Activated CD8-positive, alpha-beta memory T cell treated with anti-CD3 and anti-CD28 coated beads, Interleukin-2, amount 10 ng/mL, durations not matched to agents 7 days and 5 days (primary cell): ENCODE measurements at regions of chr9 and their contacts with region 1.

Region 1: DNA sequence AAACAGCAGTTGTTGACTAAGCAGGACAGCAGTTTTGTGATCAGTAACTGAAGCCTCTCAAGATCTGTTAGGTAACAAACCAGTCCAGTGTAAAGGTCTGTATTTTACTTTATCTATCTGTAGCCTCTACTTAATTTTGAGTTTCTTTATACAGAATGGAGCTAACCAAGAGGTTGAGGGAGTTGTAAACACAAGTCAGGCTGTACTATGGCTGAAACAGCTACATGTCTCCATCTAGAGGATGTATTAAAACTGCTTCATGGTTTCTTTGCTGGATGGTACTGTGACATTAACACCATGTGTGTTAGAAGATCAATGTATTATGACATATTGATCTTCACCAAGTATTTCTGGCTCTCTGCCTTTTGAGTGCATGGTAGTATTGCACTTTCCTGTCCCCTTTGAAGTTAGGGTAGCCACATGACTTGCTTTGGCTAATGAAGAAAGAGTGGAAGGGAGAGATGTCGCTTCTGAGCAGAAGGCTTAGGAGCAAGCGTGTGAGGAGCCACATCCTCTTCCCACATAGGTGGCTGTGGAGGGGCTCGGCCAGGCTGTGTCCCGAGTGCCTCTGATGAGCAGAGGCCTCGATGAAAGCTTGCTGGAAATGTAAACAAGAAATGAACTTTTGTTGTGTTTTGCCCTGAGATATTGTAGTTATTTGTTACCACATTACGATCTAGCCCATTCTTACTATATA is 105.6 kb upstream of the PCA3 start:
- DNase-seq: no peak
- ATAC-seq: peak; percentile 96
- H3K4me3 Mint-ChIP-seq: no peak overlapping the region
- H3K27ac Mint-ChIP-seq: no peak overlapping the region
- H3K4me1 Mint-ChIP-seq: peaks cover 63% of the 10 kb centered on the region
- H3K27me3 Mint-ChIP-seq: peaks cover 3% of the 10 kb centered on the region

Region 2: DNA sequence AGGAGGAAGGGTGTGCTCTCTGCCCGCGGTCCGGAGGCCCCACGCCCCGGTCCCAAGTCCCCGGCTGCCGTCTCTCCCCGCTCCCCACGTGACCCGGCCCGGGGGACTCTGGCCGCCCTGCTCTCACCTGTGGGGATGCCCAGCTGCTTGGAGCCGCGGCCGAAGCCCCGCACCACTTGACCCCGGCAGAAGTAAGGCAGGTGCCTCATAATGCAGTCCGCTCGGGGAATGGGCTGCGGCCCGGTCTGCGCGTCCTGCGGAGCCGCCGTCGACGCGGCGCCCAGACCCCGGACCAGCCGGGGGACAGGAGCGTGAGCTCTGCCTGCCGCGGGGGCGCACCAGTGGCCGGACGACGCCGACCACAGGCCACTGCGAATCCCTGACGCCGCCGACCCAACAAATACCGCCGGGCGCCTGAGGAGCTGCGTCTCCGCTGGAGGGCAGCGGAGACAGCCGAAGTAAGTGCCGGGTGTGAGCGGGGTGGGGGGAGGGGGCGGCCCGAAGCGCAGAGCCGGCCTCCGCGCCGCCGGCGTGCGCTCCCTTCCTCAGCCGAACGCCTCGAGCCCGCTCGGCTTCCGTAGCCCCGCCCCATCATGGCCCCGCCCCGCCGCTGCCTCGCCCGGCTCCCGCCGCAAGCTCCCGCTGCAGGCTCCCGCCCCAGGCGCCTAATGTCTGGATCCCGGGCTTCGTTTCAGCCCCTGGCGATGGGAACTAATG is 264.6 kb before region 1 on chr9 and contains the start of gene RFK:
- CTCF ChIA-PET with region 1: interaction called, 10 read pairs
- DNase-seq: peak; percentile 91
- ATAC-seq: peak; percentile 92
- H3K4me3 Mint-ChIP-seq: peak within 1 kb of the TSS; percentile 94
- H3K27ac Mint-ChIP-seq: peak within 1 kb of the TSS; percentile 98
- H3K4me1 Mint-ChIP-seq: peaks cover 34% of the 10 kb centered on the region
- H3K27me3 Mint-ChIP-seq: no peaks in the 10 kb centered on the region
- total RNA-seq, gene RFK: 17.0 to 19.0 TPM

Region 3: GRCh38 chr9:76441551-76442322 is 216.9 kb before region 1 on chr9:
- CTCF ChIA-PET with region 1: interaction called, 81 read pairs
- DNase-seq: peak; percentile 74
- ATAC-seq: peak; percentile 87
- H3K4me3 Mint-ChIP-seq: peak overlapping the region; percentile 65
- H3K27ac Mint-ChIP-seq: peak overlapping the region; percentile 84
- H3K4me1 Mint-ChIP-seq: peaks cover 70% of the 10 kb centered on the region
- H3K27me3 Mint-ChIP-seq: no peaks in the 10 kb centered on the region

Region 4: GRCh38 chr9:76704593-76705204 is 46.0 kb after region 1 on chr9:
- CTCF ChIA-PET with region 1: interaction called, 13 read pairs
- DNase-seq: no peak
- ATAC-seq: no peak
- H3K4me3 Mint-ChIP-seq: peak overlapping the region; percentile 5
- H3K27ac Mint-ChIP-seq: no peak overlapping the region
- H3K4me1 Mint-ChIP-seq: peaks cover 14% of the 10 kb centered on the region
- H3K27me3 Mint-ChIP-seq: peaks cover 62% of the 10 kb centered on the region